HEK293T (cell line): ENCODE measurements at regions of chr22 and their contacts with region 1.

Region 1: GRCh38 chr22:22616636-22617035 is 27.8 kb upstream of the GGTLC2 start:
- DNase-seq: no peak

Region 2: GRCh38 chr22:22591348-22592299 is 25.0 kb before region 1 on chr22:
- CTCF ChIA-PET with region 1: interaction called, 11 read pairs
- POLR2A ChIA-PET with region 1: no interaction called
- DNase-seq: no peak

Region 3: GRCh38 chr22:22605074-22605404 is 11.6 kb before region 1 on chr22:
- CTCF ChIA-PET with region 1: no interaction called
- POLR2A ChIA-PET with region 1: no interaction called
- DNase-seq: no peak